ENCODE measurements at regions of chr3 and their contacts with region 1.

Region 1: DNA sequence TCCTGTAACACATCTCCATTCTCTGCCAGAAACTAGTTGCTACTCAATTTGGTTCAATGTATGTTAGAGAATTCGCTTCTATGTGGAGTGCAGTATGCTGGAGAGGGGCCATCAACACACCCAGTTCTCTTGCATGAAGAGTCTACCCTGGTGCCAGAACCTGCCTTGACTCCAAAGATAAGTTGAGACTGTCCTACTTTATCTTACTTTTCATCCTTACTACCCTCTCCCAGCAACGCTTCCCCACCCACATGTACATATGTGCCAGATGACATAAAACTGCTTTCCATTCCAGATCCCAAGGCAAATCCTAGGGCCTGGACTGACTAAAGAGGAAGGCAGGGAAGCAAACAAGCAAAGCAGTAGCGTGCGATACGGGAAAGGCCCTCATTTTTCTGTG is 442.6 kb upstream of the THRB start:
- DNase-seq: no peak
- ATAC-seq: no peak
- H3K4me3 Mint-ChIP-seq: no peak overlapping the region
- H3K27ac Mint-ChIP-seq: no peak overlapping the region
- H3K4me1 Mint-ChIP-seq: no peaks in the 10 kb centered on the region
- H3K27me3 Mint-ChIP-seq: no peaks in the 10 kb centered on the region

Region 2: GRCh38 chr3:24886501-24886900 is 50.7 kb before region 1 on chr3:
- CTCF ChIA-PET with region 1: no interaction called
- POLR2A ChIA-PET with region 1: interaction called, 11 read pairs
- intact Hi-C with region 1: no loop called
- DNase-seq: no peak
- ATAC-seq: no peak
- H3K4me3 Mint-ChIP-seq: no peak overlapping the region
- H3K27ac Mint-ChIP-seq: no peak overlapping the region
- H3K4me1 Mint-ChIP-seq: no peaks in the 10 kb centered on the region
- H3K27me3 Mint-ChIP-seq: no peaks in the 10 kb centered on the region

Measured in activated CD4-positive, alpha-beta T cell treated with anti-CD3 and anti-CD28 coated beads for 36 hours (primary cell).